WTC11 (cell line): ENCODE measurements at regions of chr11 and their contacts with region 1.

Region 1: DNA sequence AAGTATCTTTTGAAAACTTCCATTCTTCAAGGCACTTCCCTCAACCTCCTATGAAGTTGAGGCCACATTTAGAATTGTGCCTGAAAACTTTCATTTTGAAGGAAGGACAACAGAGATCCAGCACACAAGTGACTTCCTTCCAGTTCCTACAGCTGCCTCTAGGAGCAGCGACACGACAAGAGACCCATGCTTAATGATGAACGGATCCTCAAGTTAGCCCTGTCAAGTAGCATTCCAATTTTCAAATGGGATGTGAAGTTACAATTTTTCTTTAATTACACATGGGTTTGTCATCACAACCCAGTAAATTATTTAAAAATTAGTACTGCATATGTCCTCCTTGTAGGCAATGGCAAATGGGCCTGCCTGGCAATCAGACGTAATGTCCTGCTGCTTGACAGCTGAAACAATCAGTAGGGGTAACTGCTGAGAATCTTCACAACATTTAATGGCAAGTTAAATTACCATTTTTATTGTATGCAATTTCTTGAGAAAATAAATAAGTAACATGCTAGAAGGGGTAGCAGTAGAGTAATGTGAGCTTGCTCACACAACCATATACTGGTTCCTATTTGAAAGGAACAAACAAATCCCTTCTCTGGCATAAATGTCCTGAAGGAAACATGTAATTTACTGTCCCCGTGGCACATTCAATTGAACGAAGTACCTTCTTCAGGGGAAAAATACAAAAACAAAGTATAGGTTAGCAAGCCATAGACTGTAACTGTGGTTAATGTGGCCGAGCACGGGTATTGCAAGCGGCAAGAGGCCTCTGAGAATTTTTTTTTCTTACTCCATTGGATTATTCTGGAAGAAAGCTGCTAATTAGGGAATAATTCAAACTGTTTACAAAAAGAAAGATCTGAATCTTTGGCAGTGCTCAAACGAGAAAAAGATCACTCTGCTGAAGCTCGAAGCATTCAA is 288.3 kb downstream of the CADM1 start:
- DNase-seq: peak; percentile 25
- ATAC-seq: peak; percentile 89
- H3K4me3 Mint-ChIP-seq: no peak overlapping the region
- H3K27ac Mint-ChIP-seq: peak overlapping the region; percentile 62; the same call in 1 of the 2 replicates
- H3K4me1 Mint-ChIP-seq: peaks cover 10% of the 10 kb centered on the region
- H3K27me3 Mint-ChIP-seq: no peaks in the 10 kb centered on the region
- CTCF ChIP-seq: 0 out of 2 replicates have a peak, but pooled peaks have one; percentile 15

Region 2: GRCh38 chr11:115085461-115086210 is 130.3 kb before region 1 on chr11:
- CTCF ChIA-PET with region 1: no interaction called
- POLR2A ChIA-PET with region 1: no interaction called
- DNase-seq: no peak
- ATAC-seq: no peak
- H3K4me3 Mint-ChIP-seq: no peak overlapping the region
- H3K27ac Mint-ChIP-seq: no peak overlapping the region
- H3K4me1 Mint-ChIP-seq: 0 out of 2 replicates have a peak, but pooled peaks cover 10% of the 10 kb centered on the region
- H3K27me3 Mint-ChIP-seq: no peaks in the 10 kb centered on the region
- CTCF ChIP-seq: no peak

Region 3: DNA sequence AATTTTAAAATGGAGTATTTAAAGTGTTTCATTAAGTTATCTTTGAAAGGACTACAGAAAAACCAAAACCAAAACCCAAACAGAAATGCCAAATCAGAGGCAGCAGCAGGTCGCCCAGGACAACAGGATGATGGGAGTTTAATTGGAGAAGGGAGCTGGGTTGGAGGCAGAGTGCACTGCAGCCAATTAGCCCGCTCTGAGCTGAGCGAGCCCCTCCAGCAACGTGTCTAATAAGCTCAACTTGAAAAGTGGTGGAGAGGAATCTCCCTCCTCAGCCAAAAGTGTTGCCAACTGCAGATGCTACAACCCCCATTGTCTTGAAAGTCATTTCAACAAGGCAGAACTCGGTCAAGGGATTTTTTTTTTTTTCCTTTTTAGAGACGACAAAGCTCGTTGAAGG is 35.7 kb before region 1 on chr11:
- CTCF ChIA-PET with region 1: interaction called, 12 read pairs
- POLR2A ChIA-PET with region 1: no interaction called
- DNase-seq: no peak
- ATAC-seq: no peak
- H3K4me3 Mint-ChIP-seq: no peak overlapping the region
- H3K27ac Mint-ChIP-seq: no peak overlapping the region
- H3K4me1 Mint-ChIP-seq: peaks cover 37% of the 10 kb centered on the region
- H3K27me3 Mint-ChIP-seq: no peaks in the 10 kb centered on the region
- CTCF ChIP-seq: no peak

Region 4: DNA sequence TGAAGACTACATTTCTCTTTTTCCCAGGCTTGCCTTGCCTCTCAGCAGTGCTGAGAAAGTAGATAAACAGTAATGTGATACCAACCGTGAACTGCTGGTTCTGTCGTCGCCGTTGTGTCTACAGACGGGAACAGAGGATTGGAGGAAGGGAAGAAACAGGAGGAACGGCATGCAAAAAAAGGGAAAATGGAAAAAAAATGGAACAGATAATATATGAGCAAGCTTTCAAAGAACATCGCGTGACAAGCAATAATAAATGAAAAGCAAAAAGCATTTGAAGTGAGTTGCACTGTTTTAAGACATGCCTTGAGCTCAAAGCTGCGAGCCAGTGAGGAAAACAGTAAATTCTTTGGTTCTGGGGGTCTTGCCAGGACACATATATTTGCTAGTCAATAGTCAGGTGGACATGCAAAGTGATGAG is 17.6 kb before region 1 on chr11:
- CTCF ChIA-PET with region 1: interaction called, 12 read pairs
- POLR2A ChIA-PET with region 1: no interaction called
- DNase-seq: no peak
- ATAC-seq: 0 out of 2 replicates have a peak, but pooled peaks have one; percentile 22
- H3K4me3 Mint-ChIP-seq: no peak overlapping the region
- H3K27ac Mint-ChIP-seq: no peak overlapping the region
- H3K4me1 Mint-ChIP-seq: peaks cover 37% of the 10 kb centered on the region
- H3K27me3 Mint-ChIP-seq: peaks cover 29% of the 10 kb centered on the region
- CTCF ChIP-seq: no peak

Region 5: GRCh38 chr11:115247361-115247760 is 31.4 kb after region 1 on chr11:
- CTCF ChIA-PET with region 1: no interaction called
- POLR2A ChIA-PET with region 1: no interaction called
- DNase-seq: no peak
- ATAC-seq: no peak
- H3K4me3 Mint-ChIP-seq: no peak overlapping the region
- H3K27ac Mint-ChIP-seq: no peak overlapping the region
- H3K4me1 Mint-ChIP-seq: peaks cover 2% of the 10 kb centered on the region; the same call in 1 of the 2 replicates
- H3K27me3 Mint-ChIP-seq: no peaks in the 10 kb centered on the region
- CTCF ChIP-seq: no peak